Head of caudate nucleus (tissue), 42 donors: ENCODE measurements at regions of chr11 and their contacts with region 1.

Region 1: GRCh38 chr11:59802639-59803176 is 7.9 kb downstream of the MRPL16 start:
- DNase-seq: peak in 18 of 42 donors; percentile 14 to 83 (median 53)

Region 2: GRCh38 chr11:59545179-59546020 is 257.3 kb before region 1 on chr11:
- intact Hi-C with region 1: loop called (anchors 10 kb)
- DNase-seq: peak in 1 of 42 donors; percentile 31

Region 3: DNA sequence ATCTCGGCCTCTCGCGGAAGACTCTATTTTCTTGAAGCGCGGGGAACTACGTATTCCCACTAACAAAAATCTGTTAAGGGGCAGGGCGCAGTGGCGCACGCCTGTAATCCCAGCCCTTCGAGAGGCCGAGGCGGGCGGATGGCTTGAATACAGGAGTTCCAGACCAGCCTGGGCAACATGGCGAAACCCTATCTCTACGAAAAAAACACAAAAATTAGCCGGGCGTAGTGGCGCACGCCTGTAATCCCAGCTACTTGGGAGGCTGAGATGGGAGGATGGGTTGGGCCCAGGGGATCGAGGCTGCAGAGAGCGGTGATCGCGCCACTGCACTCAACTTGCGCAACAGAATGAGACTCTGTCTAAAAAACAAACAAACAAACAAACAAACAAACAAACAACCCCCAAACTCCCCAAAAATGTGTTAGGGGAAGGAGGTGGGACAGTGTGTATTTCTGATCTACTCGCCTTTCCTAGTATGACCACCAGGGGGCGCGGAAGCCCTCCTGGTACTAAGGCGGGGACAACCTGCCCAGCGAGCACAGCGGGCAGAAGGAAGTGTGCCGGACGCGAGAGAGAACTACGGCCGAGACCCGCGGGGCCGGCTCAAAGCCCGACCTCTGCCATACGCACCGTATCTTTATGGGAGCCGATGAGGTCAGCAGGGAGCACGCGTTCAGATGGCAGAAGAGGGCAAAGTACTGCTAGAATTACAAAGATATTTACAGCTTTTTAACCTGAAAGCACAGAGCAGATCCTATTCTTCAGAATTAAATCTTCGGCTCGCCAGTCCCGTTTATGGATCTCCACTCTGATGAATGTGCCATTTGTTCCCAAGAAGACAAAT is 48.8 kb before region 1 on chr11:
- intact Hi-C with region 1: loop called (anchors 1 kb)
- DNase-seq: peak; percentile 78 to 97 (median 90)